Lower leg skin (tissue), 4 donors: ENCODE measurements at regions of chr6 and their contacts with region 1.

Region 1: DNA sequence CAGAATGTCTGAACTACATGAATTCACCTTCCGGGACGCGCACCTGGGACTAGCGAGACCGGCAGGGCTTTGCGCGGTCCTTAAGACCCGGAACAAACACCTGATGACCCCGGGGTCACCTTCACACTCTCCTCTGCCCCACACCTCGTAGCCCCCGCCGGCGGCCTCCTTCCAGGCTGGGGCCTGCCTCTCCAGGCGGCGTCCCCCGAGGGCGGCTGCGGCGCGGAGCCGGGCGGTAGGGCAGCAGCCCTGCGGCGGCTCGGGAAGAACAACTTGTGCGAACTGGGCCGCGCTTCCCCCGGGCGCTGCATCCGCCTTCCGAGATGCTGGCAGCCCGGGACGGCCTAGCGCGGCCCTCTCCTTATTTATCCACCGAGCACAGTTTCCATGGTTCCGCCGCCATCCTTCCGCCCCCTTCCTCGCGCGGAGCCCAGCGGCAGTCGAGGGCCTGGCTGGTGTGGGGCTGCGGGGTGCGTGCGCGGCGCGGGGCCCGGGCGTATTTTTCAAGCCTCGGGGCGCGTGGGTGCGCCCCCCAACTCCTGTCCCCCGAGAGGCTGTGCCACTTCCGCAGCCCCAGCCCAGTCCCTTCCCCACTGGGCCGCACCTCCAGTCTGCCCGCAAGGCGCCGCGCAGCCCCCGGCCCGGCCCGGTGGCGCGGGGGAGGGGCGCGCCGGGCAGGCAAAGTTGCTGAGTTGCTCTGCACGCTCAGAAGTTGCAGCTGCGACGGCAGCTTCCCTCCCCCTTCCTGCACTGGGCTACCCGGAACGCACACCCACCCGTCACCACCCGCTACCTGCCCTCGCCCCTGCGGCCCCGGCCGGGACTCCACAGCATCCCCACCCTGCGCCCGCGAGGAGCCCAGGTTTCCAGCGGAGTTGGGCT is 56.3 kb upstream of the RREB1 start:
- DNase-seq: peak in 1 of 2 donors; percentile 90
- H3K4me3 ChIP-seq: peak overlapping the region; percentile 41
- CTCF ChIP-seq: no peak
- POLR2A ChIP-seq: no peak

Region 2: GRCh38 chr6:7910654-7911344 is 859.3 kb after region 1 on chr6 and contains the start of gene TXNDC5:
- intact Hi-C with region 1: loop called (anchors 5 kb)
- DNase-seq: peak; percentile 54 to 94
- H3K4me3 ChIP-seq: peak within 1 kb of the TSS; percentile 91
- CTCF ChIP-seq: no peak
- POLR2A ChIP-seq: no peak
- total RNA-seq, gene TXNDC5: 29.3 to 68.5 (median 44.1) TPM